ENCODE measurements at regions of chr12 and their contacts with region 1.

Region 1: GRCh38 chr12:109858764-109859163 is 21.6 kb downstream of the GLTP start:
- DNase-seq: no peak
- H3K4me3 ChIP-seq: no peak overlapping the region
- H3K27ac ChIP-seq: no peak overlapping the region
- H3K4me1 ChIP-seq: no peaks in the 10 kb centered on the region
- H3K27me3 ChIP-seq: no peaks in the 10 kb centered on the region
- CTCF ChIP-seq: no peak
- EP300 ChIP-seq: no peak
- POLR2A ChIP-seq: no peak
- RAD21 ChIP-seq: no peak

Region 2: GRCh38 chr12:109827526-109828235 is 31.1 kb before region 1 on chr12:
- CTCF ChIA-PET with region 1: interaction called, 10 read pairs
- POLR2A ChIA-PET with region 1: no interaction called
- DNase-seq: no peak
- H3K4me3 ChIP-seq: no peak overlapping the region
- H3K27ac ChIP-seq: no peak overlapping the region
- H3K4me1 ChIP-seq: peaks cover 0 to 8% (median 1%) of the 10 kb centered on the region in 4 experiments; a peak in 6 of 7 replicates
- H3K27me3 ChIP-seq: no peaks in the 10 kb centered on the region
- CTCF ChIP-seq: no peak
- EP300 ChIP-seq: no peak
- POLR2A ChIP-seq: no peak
- RAD21 ChIP-seq: no peak

Region 3: GRCh38 chr12:109870648-109871047 is 11.9 kb after region 1 on chr12:
- CTCF ChIA-PET with region 1: interaction called, 86 read pairs
- POLR2A ChIA-PET with region 1: no interaction called
- DNase-seq: no peak
- H3K4me3 ChIP-seq: no peak overlapping the region
- H3K27ac ChIP-seq: no peak overlapping the region
- H3K4me1 ChIP-seq: no peaks in the 10 kb centered on the region
- H3K27me3 ChIP-seq: no peaks in the 10 kb centered on the region
- CTCF ChIP-seq: no peak
- EP300 ChIP-seq: no peak
- POLR2A ChIP-seq: no peak
- RAD21 ChIP-seq: no peak

Region 4: GRCh38 chr12:109910969-109911348 is 52.2 kb after region 1 on chr12:
- CTCF ChIA-PET with region 1: interaction called, 54 read pairs
- POLR2A ChIA-PET with region 1: no interaction called
- DNase-seq: peak; percentile 60 to 87
- H3K4me3 ChIP-seq: no peak overlapping the region
- H3K27ac ChIP-seq: no peak overlapping the region
- H3K4me1 ChIP-seq: no peaks in the 10 kb centered on the region; a peak in 1 of 7 replicates
- H3K27me3 ChIP-seq: peaks cover 0 to 17% (median 7%) of the 10 kb centered on the region in 4 experiments; a peak in 3 of 7 replicates
- CTCF ChIP-seq: peak; percentile 99 to 100 (median 99)
- EP300 ChIP-seq: no peak
- POLR2A ChIP-seq: no peak
- RAD21 ChIP-seq: peak; percentile 72 to 83

Region 5: DNA sequence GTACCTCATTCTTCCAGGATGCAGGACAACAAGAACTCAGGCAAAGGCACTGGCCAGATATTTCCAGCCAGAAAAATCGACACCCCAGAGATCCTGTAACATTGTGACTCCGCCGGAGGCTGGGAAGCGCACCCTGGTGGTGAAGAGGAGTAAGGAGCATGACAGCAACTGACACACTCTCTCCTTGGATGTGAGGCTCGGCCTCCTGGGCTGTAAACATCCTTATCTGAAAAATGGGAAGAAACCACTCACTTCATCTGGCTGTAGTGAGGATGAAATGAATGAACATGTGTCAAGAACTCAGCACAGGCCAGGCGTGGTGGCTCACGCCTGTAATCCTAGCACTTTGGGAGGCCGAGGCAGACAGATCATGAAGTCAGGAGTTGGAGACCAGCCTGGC is 68.9 kb after region 1 on chr12:
- CTCF ChIA-PET with region 1: interaction called, 77 read pairs
- POLR2A ChIA-PET with region 1: interaction called, 3 read pairs
- DNase-seq: peak in 1 of 2 experiments; percentile 62
- H3K4me3 ChIP-seq: no peak overlapping the region
- H3K27ac ChIP-seq: no peak overlapping the region
- H3K4me1 ChIP-seq: no peaks in the 10 kb centered on the region; a peak in 1 of 7 replicates
- H3K27me3 ChIP-seq: no peaks in the 10 kb centered on the region
- CTCF ChIP-seq: peak; percentile 72 to 94 (median 91)
- EP300 ChIP-seq: no peak
- POLR2A ChIP-seq: no peak
- RAD21 ChIP-seq: peak; percentile 62 to 66